Naive thymus-derived CD4-positive, alpha-beta T cell (primary cell): ENCODE measurements at regions of chr11 and their contacts with region 1.

Region 1: DNA sequence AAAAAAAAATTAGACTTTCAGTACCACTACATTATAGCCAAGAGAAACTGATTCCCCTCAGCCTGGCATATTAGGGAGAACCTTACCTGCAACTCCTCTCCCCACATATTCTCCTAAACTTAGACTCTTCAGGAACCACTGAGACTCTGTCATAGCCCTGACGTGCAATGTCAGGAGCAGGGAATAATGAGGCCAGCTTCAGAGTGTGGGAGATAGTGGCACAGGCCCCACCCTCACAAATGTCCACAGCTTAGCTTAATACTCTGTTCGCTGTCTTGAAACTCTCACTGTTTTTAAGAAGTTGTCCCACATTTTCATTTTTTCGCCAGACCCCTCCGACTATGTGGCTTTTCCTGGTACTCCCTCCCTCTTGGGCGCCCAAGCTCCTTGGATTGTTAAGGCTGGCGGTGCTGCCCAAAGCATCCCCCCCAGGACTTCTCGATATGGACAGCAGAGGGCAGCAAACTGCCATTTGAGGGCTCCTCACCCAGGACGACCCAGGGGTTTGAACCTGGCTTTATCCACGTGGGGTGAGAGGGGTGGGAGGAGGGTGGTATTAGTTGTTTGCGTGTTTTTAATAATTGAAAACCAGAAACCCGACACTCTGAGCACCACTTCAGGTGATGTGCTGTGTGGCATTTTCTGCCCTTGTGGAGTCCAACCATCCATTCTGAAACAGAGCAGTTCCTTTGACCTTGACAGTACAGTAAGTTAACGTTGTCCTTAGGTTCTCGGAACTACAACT is 45.2 kb upstream of the RASSF10 start:
- DNase-seq: peak; percentile 13 to 59 (median 39)
- ATAC-seq: peak; percentile 76
- H3K4me3 ChIP-seq: no peak overlapping the region
- H3K4me3 Mint-ChIP-seq: peak overlapping the region in 1 of 10 donors; percentile 5
- H3K27ac ChIP-seq: no peak overlapping the region
- H3K27ac Mint-ChIP-seq: no peak overlapping the region
- H3K4me1 ChIP-seq: no peaks in the 10 kb centered on the region
- H3K4me1 Mint-ChIP-seq: no peaks in the 10 kb centered on the region
- H3K27me3 ChIP-seq: no peaks in the 10 kb centered on the region
- H3K27me3 Mint-ChIP-seq: peaks cover 17 to 37% (median 30%) of the 10 kb centered on the region in 5 donors

Region 2: DNA sequence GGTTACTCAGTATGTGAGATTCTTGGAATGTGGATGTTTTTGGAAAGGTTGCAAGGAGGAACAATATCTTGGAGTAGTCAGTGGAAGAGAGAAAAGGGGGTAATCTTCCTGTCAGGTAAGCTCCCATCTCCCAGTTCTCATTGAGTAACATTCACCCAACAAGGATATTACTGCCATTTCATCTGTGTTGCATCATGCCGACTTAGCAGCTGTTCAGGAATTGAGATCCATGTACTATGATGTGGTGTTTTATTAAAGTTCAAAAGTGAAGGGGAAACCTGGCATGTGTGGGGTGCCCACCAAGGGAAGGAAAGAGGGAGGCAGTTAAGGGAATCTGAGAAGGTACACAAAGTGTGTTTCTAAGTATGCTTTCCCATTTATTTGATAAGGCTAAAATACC is 13.3 kb before region 1 on chr11:
- CTCF ChIA-PET with region 1: no interaction called
- POLR2A ChIA-PET with region 1: no interaction called
- intact Hi-C with region 1: no loop called
- DNase-seq: no peak
- ATAC-seq: no peak
- H3K4me3 ChIP-seq: no peak overlapping the region
- H3K4me3 Mint-ChIP-seq: no peak overlapping the region
- H3K27ac ChIP-seq: no peak overlapping the region
- H3K27ac Mint-ChIP-seq: no peak overlapping the region
- H3K4me1 ChIP-seq: no peaks in the 10 kb centered on the region
- H3K4me1 Mint-ChIP-seq: no peaks in the 10 kb centered on the region
- H3K27me3 ChIP-seq: peaks cover 0 to 9% of the 10 kb centered on the region in 2 donors
- H3K27me3 Mint-ChIP-seq: peaks cover 16 to 56% (median 46%) of the 10 kb centered on the region in 5 donors

Region 3: GRCh38 chr11:13238879-13239514 is 275.0 kb after region 1 on chr11:
- CTCF ChIA-PET with region 1: no interaction called
- POLR2A ChIA-PET with region 1: no interaction called
- intact Hi-C with region 1: loop called (anchors 1 kb)
- DNase-seq: peak; percentile 11 to 59 (median 43)
- ATAC-seq: peak; percentile 84
- H3K4me3 ChIP-seq: no peak overlapping the region
- H3K4me3 Mint-ChIP-seq: no peak overlapping the region
- H3K27ac ChIP-seq: no peak overlapping the region
- H3K27ac Mint-ChIP-seq: no peak overlapping the region
- H3K4me1 ChIP-seq: no peaks in the 10 kb centered on the region
- H3K4me1 Mint-ChIP-seq: peaks cover 0 to 5% (median 0%) of the 10 kb centered on the region in 7 donors
- H3K27me3 ChIP-seq: no peaks in the 10 kb centered on the region
- H3K27me3 Mint-ChIP-seq: peaks cover 0 to 45% (median 15%) of the 10 kb centered on the region in 5 donors

Region 4: GRCh38 chr11:13384908-13385640 is 421.1 kb after region 1 on chr11:
- CTCF ChIA-PET with region 1: no interaction called
- POLR2A ChIA-PET with region 1: no interaction called
- intact Hi-C with region 1: loop called in 1 of 2 experiments (anchors 1 kb)
- DNase-seq: peak in 5 of 9 donors; percentile 5 to 22 (median 10)
- ATAC-seq: peak; percentile 46
- H3K4me3 ChIP-seq: no peak overlapping the region
- H3K4me3 Mint-ChIP-seq: no peak overlapping the region
- H3K27ac ChIP-seq: no peak overlapping the region
- H3K27ac Mint-ChIP-seq: peak overlapping the region in 8 of 9 donors; percentile 3 to 80 (median 46)
- H3K4me1 ChIP-seq: no peaks in the 10 kb centered on the region
- H3K4me1 Mint-ChIP-seq: peaks cover 0 to 8% (median 0%) of the 10 kb centered on the region in 7 donors
- H3K27me3 ChIP-seq: no peaks in the 10 kb centered on the region
- H3K27me3 Mint-ChIP-seq: no peaks in the 10 kb centered on the region